ENCODE measurements at regions of chr5 and their contacts with region 1.

Region 1: GRCh38 chr5:6206501-6206900 is 171.8 kb downstream of the MED10 start:
- DNase-seq: no peak
- ATAC-seq: no peak
- H3K4me3 ChIP-seq: no peak overlapping the region
- H3K27ac ChIP-seq: no peak overlapping the region
- H3K4me1 ChIP-seq: no peaks in the 10 kb centered on the region
- H3K27me3 ChIP-seq: no peaks in the 10 kb centered on the region
- CTCF ChIP-seq: no peak

Region 2: DNA sequence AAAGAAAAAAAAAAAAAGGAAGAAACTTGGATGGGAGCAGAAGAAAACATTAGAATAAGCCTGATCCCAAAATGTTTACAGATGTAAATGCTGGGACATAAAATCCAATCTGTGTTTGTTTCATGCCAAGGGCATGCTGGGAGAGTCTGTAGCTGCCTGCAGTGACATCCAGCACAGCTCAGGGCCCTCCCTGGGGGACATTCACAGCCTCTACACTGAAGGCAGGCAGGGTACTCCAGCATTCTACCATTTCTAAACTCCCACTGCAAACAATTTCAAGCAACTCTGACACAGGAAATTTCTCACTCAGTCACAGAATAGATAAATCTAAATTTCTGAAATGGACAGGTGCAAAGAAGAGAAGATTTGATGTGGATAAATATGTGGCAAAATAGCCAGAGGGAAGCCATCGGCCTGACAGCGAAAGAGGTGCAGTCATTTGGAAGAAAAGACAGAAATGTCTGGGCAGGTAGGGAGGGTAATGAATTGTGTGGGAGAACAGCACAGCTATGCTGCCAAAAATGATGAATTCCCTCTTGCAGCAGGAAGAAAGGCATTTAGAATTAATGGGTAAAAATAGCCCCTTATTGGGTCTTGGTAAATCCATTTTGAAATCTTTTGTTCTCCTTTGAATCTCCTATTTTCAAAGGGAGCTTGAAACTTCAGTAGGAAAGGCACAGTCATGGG is 27.5 kb before region 1 on chr5:
- intact Hi-C with region 1: loop called in 1 of 10 experiments (anchors 1 kb)
- DNase-seq: no peak
- ATAC-seq: no peak
- H3K4me3 ChIP-seq: no peak overlapping the region
- H3K27ac ChIP-seq: no peak overlapping the region
- H3K4me1 ChIP-seq: no peaks in the 10 kb centered on the region
- H3K27me3 ChIP-seq: peaks cover 0 to 4% (median 0%) of the 10 kb centered on the region in 7 donors
- CTCF ChIP-seq: no peak